ENCODE measurements at regions of chr3 and their contacts with region 1.

Region 1: DNA sequence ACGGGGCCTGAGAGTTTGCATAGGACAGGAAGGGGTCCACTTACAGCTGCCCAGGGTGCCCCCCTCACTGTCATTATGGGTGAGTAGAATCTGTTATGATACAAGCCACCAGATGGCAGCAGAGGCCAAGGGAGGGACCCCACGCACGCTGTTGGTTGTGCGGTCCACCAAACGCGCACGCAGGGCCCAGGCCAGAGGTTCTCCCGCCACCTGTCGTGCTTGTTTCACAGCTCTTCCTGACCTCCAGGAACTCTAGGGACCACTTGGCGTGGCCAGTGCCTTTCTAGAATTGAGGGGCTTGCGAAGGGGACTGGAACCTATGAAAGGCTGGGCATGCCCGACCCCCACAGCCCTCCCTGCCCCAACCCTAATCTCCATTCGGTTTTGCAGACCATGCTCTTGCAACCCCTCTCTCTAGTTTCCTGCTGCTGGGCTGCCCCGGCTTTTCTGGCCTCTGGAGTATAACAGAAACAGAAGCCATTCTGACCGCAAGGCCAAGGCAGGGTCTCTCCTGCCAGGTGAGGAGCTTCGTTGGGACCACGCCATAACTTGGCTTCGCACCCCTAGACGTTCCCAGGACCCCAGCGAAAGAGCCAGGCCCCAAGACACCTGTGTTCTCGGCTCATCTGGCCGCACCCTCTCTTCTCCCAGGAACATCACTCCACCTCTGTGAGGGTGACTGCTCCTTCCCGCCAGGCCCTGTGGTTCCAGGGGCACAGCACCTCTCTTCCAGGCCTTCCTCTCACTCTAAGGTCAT is 46.0 kb downstream of the ALDH1L1 start:
- DNase-seq: peak; percentile 79
- H3K4me3 ChIP-seq: no peak overlapping the region
- H3K27ac ChIP-seq: peak overlapping the region; percentile 44
- H3K4me1 ChIP-seq: peaks cover 14% of the 10 kb centered on the region
- H3K27me3 ChIP-seq: no peaks in the 10 kb centered on the region
- CTCF ChIP-seq: peak; percentile 83

Region 2: DNA sequence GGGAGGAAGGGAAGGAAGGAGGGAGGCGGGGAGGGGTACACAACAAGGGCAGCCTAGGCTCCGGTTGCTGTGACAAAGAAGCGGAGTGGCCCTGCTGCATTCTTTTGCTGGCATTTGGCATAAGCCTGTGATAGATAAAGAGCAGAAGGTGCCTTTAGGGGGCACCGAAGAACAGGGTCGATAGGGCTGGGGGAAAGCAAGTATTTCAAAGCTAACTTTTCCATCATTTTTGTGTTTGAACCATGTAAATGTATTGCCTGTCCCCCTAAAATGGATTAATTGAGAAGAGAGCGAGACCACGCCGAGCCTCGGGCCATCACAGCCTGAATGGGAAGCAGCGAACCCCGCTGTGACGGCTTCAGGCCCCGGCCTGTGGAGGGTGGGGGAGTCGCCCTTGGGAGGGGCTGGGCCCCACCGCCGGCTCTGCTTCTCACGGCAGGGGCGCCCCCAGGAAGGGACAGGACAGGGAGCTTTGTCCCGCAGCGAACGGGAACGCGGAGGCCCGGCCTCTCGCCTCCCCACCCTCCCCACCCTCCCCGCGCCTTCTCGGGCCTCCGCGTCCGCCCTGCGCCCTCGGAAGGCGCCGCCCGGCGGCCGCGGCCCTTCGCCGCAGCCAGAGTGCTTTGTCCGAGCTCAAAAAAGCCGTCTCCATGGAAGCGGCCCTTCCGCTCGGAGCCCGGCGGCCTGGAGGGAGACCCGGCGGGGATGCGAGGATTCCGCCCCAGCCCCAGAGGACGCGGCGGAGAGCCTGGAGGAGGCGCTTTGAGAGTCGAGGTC is 78.4 kb after region 1 on chr3:
- CTCF ChIA-PET with region 1: no interaction called
- POLR2A ChIA-PET with region 1: no interaction called
- intact Hi-C with region 1: loop called (anchors 5 kb)
- DNase-seq: peak; percentile 60
- H3K4me3 ChIP-seq: no peak overlapping the region
- H3K27ac ChIP-seq: no peak overlapping the region
- H3K4me1 ChIP-seq: peaks cover 17% of the 10 kb centered on the region
- H3K27me3 ChIP-seq: no peaks in the 10 kb centered on the region
- CTCF ChIP-seq: peak; percentile 33

Region 3: GRCh38 chr3:126267226-126267975 is 133.0 kb after region 1 on chr3:
- CTCF ChIA-PET with region 1: no interaction called
- POLR2A ChIA-PET with region 1: no interaction called
- intact Hi-C with region 1: no loop called
- DNase-seq: no peak
- H3K4me3 ChIP-seq: no peak overlapping the region
- H3K27ac ChIP-seq: no peak overlapping the region
- H3K4me1 ChIP-seq: peaks cover 31% of the 10 kb centered on the region
- H3K27me3 ChIP-seq: no peaks in the 10 kb centered on the region
- CTCF ChIP-seq: no peak

Region 4: DNA sequence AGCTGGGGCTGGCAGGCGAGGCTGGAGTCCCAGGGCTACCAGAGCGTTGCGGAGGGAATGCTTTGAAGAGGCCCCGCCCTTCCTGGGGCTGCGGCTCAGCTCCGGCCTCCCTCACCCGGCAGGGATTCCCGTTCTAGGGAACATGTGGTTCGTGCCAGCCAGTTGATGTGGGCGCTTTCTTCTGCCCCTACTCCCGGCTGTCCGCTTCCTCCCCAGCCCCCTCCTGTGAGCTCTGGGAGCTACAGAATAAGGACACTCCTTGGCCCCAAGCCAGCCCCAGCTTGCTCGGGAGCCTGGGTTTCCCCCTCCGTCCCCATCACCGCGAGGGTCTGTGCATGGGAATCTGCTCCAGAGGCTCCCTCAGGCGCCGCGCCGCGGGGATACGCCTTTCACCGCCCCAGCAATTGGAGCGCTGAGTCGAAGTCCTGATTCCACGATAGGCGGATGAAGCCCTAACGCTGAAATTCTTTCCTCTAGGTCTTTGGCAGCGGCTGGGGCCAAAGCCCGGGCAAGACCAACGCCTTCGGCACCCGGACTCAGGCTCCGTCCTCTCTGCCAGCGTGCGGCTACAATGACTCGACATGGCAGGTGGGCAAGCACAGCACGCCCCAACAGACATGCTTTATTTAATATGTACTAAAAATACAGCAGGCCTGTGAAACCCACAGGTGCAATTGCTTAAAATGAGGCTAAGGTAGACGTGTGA is 153.3 kb after region 1 on chr3:
- CTCF ChIA-PET with region 1: interaction called, 3 read pairs
- POLR2A ChIA-PET with region 1: no interaction called
- intact Hi-C with region 1: loop called (anchors 10 kb)
- DNase-seq: peak; percentile 98
- H3K4me3 ChIP-seq: peak overlapping the region; percentile 49
- H3K27ac ChIP-seq: peak overlapping the region; percentile 99
- H3K4me1 ChIP-seq: peaks cover 72% of the 10 kb centered on the region
- H3K27me3 ChIP-seq: no peaks in the 10 kb centered on the region
- CTCF ChIP-seq: no peak

Region 5: GRCh38 chr3:126475413-126476114 is 341.2 kb after region 1 on chr3 and contains the start of gene ZXDC:
- CTCF ChIA-PET with region 1: no interaction called
- POLR2A ChIA-PET with region 1: no interaction called
- intact Hi-C with region 1: loop called (anchors 10 kb)
- DNase-seq: peak; percentile 95
- H3K4me3 ChIP-seq: peak within 1 kb of the TSS; percentile 86
- H3K27ac ChIP-seq: peak within 1 kb of the TSS; percentile 87
- H3K4me1 ChIP-seq: peaks cover 26% of the 10 kb centered on the region
- H3K27me3 ChIP-seq: no peaks in the 10 kb centered on the region
- CTCF ChIP-seq: peak; percentile 35; the same call in 1 of the 2 replicates
- total RNA-seq, gene ZXDC: 61.1 and 63.2 TPM in 2 replicates

Measured in A673 (cell line).